Natural killer cell (primary cell): ENCODE measurements at regions of chr11 and their contacts with region 1.

Region 1: DNA sequence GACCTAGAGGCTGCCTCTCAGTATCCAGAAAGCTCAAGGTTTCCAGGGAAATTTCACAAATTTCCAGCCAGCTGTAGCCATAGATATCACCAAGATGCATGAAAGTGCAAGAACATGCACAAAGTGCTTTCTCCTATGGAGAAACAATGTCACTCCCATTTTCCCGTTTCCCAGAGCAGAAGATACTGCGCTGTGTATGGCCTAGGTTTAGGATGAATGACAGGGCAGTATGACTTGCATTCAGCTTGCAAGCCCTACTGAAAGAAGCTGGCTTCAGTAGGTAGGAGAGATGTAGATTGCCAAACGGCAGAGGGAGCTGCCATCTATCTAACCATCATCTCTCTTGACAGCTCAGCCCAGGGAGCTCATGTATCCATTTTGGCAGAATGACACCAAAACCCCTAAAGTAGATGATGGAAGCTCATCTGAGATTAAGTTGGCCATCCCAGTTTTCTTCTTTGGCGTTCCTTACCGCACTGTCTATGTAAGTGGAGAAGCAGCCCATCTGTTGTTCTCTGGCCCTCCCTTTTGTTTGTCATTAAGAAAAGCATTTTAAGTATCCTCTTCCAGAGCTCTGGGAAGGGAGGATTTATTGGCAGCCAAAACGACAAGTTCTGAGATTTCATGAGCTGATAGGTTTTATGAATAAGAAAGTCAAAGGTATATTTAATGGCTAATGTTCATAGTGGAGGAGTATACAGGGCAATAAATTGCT is 4.6 kb downstream of the TECTA start:
- DNase-seq: no peak
- ATAC-seq: no peak
- H3K4me3 ChIP-seq: no peak overlapping the region
- H3K4me3 Mint-ChIP-seq: no peak overlapping the region
- H3K27ac ChIP-seq: no peak overlapping the region
- H3K27ac Mint-ChIP-seq: no peak overlapping the region
- H3K4me1 ChIP-seq: no peaks in the 10 kb centered on the region
- H3K4me1 Mint-ChIP-seq: peaks cover 0 to 8% of the 10 kb centered on the region in 2 donors
- H3K27me3 ChIP-seq: no peaks in the 10 kb centered on the region
- H3K27me3 Mint-ChIP-seq: peaks cover 2 to 28% of the 10 kb centered on the region in 2 donors
- CTCF ChIP-seq: no peak

Region 2: GRCh38 chr11:121086866-121087265 is 18.8 kb before region 1 on chr11:
- intact Hi-C with region 1: loop called (anchors 2 kb)
- DNase-seq: no peak
- ATAC-seq: no peak
- H3K4me3 ChIP-seq: no peak overlapping the region
- H3K4me3 Mint-ChIP-seq: no peak overlapping the region
- H3K27ac ChIP-seq: no peak overlapping the region
- H3K27ac Mint-ChIP-seq: no peak overlapping the region
- H3K4me1 ChIP-seq: no peaks in the 10 kb centered on the region
- H3K4me1 Mint-ChIP-seq: no peaks in the 10 kb centered on the region
- H3K27me3 ChIP-seq: no peaks in the 10 kb centered on the region
- H3K27me3 Mint-ChIP-seq: no peaks in the 10 kb centered on the region
- CTCF ChIP-seq: no peak